CD4-positive, alpha-beta memory T cell (primary cell): ENCODE measurements at regions of chr6 and their contacts with region 1.

Region 1: DNA sequence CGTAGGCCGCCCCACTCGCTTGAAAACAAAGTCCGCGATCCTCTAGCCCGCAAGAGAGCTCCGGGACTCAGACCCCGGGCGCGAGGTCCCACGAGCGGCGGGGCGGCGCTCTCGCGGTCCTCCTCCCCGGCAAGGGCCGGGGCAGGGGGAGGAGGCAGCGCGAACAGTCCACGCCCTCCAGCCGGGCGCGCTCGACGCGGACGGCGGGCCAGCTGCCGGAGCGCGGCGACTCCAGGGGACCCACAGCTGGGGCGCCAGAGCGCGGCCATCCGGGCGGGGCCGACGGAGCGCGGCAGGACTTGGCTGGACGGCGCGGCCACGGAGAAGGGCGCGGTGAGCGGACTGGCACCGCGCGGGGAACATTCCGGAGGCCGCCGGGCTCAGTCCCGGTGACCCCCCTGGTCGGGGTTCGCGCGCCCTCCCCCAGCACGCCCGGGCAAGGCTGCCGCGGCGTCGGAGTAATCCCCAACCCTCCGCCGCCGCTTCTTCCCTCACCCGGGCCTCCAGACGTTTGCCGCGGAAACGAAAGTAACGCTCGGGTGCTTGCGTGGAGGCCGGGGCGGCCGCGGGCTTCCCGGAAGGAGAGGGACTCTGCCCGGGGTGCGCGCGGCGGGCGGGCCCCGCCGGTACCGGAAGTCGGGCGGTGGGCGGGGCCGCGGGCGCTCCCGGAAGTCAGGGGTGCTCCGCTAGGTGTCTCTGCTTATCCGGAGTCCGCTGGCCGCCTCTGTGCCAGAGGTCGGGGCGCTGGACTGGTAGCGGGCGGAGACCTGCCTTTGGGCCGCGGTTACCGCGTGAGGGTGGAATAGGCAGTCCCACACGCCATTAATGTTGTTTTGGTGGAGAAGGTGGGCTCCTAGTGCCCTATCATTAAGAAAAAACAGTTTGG is at the start of gene RIPK1:
- DNase-seq: peak; percentile 93 to 96 (median 94)
- H3K4me3 ChIP-seq: peak within 1 kb of the TSS; percentile 64 to 88
- H3K4me3 Mint-ChIP-seq: peak within 1 kb of the TSS; percentile 94 to 99 (median 96)
- H3K27ac ChIP-seq: peak within 1 kb of the TSS; percentile 98
- H3K27ac Mint-ChIP-seq: peak within 1 kb of the TSS; percentile 96 to 99 (median 98)
- H3K4me1 ChIP-seq: peaks cover 61% of the 10 kb centered on the region
- H3K4me1 Mint-ChIP-seq: peaks cover 40 to 85% (median 57%) of the 10 kb centered on the region in 4 donors
- H3K27me3 ChIP-seq: no peaks in the 10 kb centered on the region
- H3K27me3 Mint-ChIP-seq: no peaks in the 10 kb centered on the region
- total RNA-seq, gene RIPK1: 38.7 to 39.0 TPM

Region 2: DNA sequence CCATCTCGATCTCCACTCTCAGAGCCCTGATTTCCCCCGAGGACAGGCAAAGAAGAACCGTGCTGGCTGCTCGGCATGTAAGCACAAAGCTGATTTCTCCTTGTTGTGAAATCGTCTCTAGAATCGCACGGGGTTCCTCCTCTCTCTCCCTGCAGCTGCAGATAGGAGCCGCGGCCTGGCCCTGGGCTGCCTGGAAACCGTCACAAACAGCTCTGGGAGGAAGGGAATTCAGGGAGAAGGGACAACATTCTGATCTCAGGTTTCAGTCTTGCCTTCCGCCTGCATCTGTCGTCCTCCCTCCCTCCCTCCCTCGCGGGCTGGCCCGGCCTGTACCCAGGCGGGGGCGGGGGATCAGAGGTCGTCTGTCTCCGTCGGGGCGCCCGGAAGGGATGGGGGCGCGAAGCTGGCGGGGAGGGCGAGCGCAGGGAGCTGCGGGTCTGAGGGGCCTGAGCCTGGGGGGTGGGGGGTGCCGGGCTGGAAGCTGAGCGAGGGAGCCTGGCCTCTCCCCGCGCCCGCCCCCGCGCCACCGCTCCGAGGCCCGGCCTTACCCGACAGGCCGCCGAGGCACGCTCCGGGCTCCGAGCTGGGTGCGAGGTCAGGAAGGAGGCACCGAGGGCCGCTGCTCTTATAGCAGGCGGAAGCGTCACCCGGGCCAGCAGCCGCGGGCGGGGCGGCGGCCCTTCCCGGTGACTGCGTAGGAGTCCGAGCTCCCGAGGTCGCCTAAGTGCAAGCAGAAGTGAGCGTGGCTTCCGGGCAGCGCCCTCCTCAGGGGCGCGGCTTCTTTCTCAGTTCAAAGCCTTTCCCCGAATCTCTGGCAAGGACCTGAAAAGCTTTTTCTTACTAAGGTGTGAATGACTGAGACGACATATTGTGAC is 227.1 kb before region 1 on chr6 and contains the start of gene SERPINB1:
- CTCF ChIA-PET with region 1: no interaction called
- POLR2A ChIA-PET with region 1: interaction called, 10 read pairs
- intact Hi-C with region 1: no loop called
- DNase-seq: peak; percentile 64 to 73 (median 68)
- H3K4me3 ChIP-seq: peak within 1 kb of the TSS; percentile 49 to 58
- H3K4me3 Mint-ChIP-seq: peak within 1 kb of the TSS; percentile 89 to 96 (median 93)
- H3K27ac ChIP-seq: peak within 1 kb of the TSS; percentile 73
- H3K27ac Mint-ChIP-seq: peak within 1 kb of the TSS; percentile 93 to 98 (median 95)
- H3K4me1 ChIP-seq: peaks cover 46% of the 10 kb centered on the region
- H3K4me1 Mint-ChIP-seq: peaks cover 39 to 63% (median 51%) of the 10 kb centered on the region in 4 donors
- H3K27me3 ChIP-seq: no peaks in the 10 kb centered on the region
- H3K27me3 Mint-ChIP-seq: no peaks in the 10 kb centered on the region
- total RNA-seq, gene SERPINB1: 56.7 to 58.0 TPM

Region 3: GRCh38 chr6:2999618-3000557 is 68.7 kb before region 1 on chr6 and contains the start of gene NQO2:
- CTCF ChIA-PET with region 1: interaction called, 20 read pairs
- POLR2A ChIA-PET with region 1: interaction called, 29 read pairs
- intact Hi-C with region 1: loop called (anchors 1 kb)
- DNase-seq: peak; percentile 79 to 88 (median 85)
- H3K4me3 ChIP-seq: peak within 1 kb of the TSS; percentile 81 to 92
- H3K4me3 Mint-ChIP-seq: peak within 1 kb of the TSS; percentile 87 to 95 (median 91)
- H3K27ac ChIP-seq: peak within 1 kb of the TSS; percentile 80
- H3K27ac Mint-ChIP-seq: peak within 1 kb of the TSS; percentile 85 to 96 (median 91)
- H3K4me1 ChIP-seq: peaks cover 23% of the 10 kb centered on the region
- H3K4me1 Mint-ChIP-seq: peaks cover 17 to 38% (median 27%) of the 10 kb centered on the region in 4 donors
- H3K27me3 ChIP-seq: no peaks in the 10 kb centered on the region
- H3K27me3 Mint-ChIP-seq: no peaks in the 10 kb centered on the region
- total RNA-seq, gene NQO2: 34.2 to 36.6 TPM

Region 4: GRCh38 chr6:3052481-3053230 is 15.9 kb before region 1 on chr6:
- CTCF ChIA-PET with region 1: interaction called, 4 read pairs
- POLR2A ChIA-PET with region 1: interaction called, 24 read pairs
- intact Hi-C with region 1: no loop called
- DNase-seq: no peak
- H3K4me3 ChIP-seq: peak overlapping the region in 1 of 2 donors; percentile 61
- H3K4me3 Mint-ChIP-seq: peak overlapping the region; percentile 53 to 86 (median 78)
- H3K27ac ChIP-seq: peak overlapping the region; percentile 44
- H3K27ac Mint-ChIP-seq: peak overlapping the region in 6 of 7 donors; percentile 65 to 85 (median 80)
- H3K4me1 ChIP-seq: peaks cover 13% of the 10 kb centered on the region
- H3K4me1 Mint-ChIP-seq: peaks cover 6 to 32% (median 16%) of the 10 kb centered on the region in 4 donors
- H3K27me3 ChIP-seq: no peaks in the 10 kb centered on the region
- H3K27me3 Mint-ChIP-seq: no peaks in the 10 kb centered on the region

Region 5: DNA sequence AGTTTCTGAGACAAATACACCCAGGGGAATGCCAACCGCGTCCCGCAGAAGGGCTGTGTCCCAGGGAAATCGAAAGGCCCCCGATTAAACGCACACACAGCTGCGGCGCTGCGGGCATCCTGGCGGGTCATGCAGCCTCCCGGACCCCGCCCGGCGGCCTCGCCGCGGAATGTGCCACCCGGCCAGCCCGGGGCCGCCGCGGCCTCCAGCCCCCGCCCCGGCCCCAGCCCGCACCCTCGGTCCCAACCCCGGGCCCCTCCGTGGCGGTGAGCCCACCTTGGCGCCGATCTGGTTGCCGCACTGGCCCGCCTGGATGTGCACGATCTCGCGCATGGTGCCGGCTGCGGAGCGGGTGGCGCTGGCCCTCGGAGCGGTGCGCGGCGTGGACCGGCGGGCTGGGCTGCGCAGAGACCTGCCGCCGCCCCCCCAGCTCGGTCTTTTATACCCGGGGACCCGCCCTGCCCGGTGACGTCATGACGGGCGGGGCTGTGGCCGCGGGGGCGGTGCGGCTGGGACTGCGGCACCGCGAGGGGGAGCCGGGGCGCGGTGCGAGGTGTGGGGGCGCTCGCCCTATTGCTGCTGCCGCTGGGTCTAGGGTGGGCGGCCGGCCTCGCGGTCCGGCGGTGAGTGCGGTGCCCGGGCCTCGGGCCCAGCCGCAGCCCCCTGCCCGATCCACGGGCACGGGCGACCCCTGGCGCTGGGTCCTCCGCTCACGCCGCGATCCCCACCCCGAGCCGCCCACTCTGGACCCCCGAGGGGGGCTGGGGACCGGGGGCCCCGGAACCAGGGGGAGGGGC is 88.8 kb after region 1 on chr6 and contains the start of gene TUBB2A:
- CTCF ChIA-PET with region 1: interaction called, 3 read pairs
- POLR2A ChIA-PET with region 1: interaction called, 8 read pairs
- intact Hi-C with region 1: loop called (anchors 2 kb)
- DNase-seq: peak; percentile 83 to 95 (median 91)
- H3K4me3 ChIP-seq: peak within 1 kb of the TSS; percentile 49 to 81
- H3K4me3 Mint-ChIP-seq: peak within 1 kb of the TSS; percentile 88 to 95 (median 92)
- H3K27ac ChIP-seq: peak within 1 kb of the TSS; percentile 81
- H3K27ac Mint-ChIP-seq: peak within 1 kb of the TSS; percentile 86 to 97 (median 94)
- H3K4me1 ChIP-seq: peaks cover 30% of the 10 kb centered on the region
- H3K4me1 Mint-ChIP-seq: peaks cover 21 to 44% (median 32%) of the 10 kb centered on the region in 4 donors
- H3K27me3 ChIP-seq: no peaks in the 10 kb centered on the region
- H3K27me3 Mint-ChIP-seq: no peaks in the 10 kb centered on the region
- total RNA-seq, gene TUBB2A: 5.2 to 5.4 TPM

Region 6: DNA sequence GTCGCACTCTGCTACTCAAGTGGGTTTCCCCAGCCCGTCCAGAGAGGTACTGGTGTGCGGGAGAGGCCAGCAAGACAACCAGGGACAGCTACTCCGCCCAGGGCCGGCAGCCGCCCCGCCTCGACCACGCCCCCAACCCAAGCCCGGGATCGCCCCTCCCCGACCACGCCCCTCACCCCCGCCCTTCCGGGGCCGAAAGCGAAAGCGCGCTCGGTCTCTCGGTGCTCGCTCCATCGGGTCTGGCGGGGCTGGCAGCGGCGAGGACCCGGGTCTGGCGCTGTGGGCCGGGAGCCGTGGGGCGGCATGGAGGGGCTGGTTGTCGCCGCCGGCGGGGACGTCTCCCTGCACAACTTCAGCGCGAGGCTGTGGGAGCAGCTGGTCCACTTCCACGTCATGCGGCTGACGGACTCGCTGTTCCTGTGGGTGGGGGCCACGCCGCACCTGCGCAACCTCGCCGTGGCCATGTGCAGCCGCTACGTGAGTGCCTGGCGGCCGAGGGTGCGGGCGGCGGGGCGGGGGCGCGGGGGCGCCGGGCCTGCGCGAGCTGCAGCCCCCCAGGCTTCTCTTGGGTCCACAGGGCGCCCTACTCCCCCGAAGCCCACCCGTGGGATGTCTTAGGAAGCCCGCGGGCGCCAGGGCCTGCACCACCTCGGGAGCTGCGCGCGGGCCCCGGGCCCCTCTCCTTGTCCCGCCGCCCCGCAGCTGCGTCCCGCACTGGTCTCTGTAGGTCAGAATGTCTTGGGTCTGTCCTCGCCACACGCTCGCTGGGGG is 190.3 kb after region 1 on chr6 and contains the start of gene PSMG4:
- CTCF ChIA-PET with region 1: interaction called, 3 read pairs
- POLR2A ChIA-PET with region 1: interaction called, 3 read pairs
- intact Hi-C with region 1: loop called (anchors 2 kb)
- DNase-seq: peak; percentile 87 to 92 (median 88)
- H3K4me3 ChIP-seq: peak within 1 kb of the TSS; percentile 44 to 67
- H3K4me3 Mint-ChIP-seq: peak within 1 kb of the TSS; percentile 93 to 99 (median 96)
- H3K27ac ChIP-seq: peak within 1 kb of the TSS; percentile 70
- H3K27ac Mint-ChIP-seq: peak within 1 kb of the TSS; percentile 92 to 99 (median 95)
- H3K4me1 ChIP-seq: peaks cover 45% of the 10 kb centered on the region
- H3K4me1 Mint-ChIP-seq: peaks cover 21 to 49% (median 37%) of the 10 kb centered on the region in 4 donors
- H3K27me3 ChIP-seq: no peaks in the 10 kb centered on the region
- H3K27me3 Mint-ChIP-seq: no peaks in the 10 kb centered on the region
- total RNA-seq, gene PSMG4: 41.0 to 41.6 TPM

Region 7: DNA sequence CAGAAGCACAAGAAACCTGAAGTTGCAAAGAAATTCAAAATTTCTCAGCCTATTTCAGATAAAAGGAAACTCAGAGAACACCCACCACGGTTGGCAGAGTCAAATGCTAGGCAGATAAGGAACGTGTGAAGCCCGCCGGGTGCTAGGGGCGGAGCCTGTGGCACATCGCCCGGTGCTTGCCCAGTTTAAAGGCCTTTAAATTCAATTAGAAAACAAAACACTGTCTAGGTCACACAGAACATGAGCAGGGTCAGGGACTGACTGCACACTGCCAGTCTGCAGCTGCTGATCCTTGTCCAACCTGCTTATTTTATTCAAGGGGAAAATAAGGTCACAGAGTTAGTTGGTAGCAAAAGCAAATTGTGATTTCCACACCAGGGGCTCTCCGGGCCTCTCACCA is 266.0 kb after region 1 on chr6:
- CTCF ChIA-PET with region 1: no interaction called
- POLR2A ChIA-PET with region 1: no interaction called
- intact Hi-C with region 1: no loop called
- DNase-seq: no peak
- H3K4me3 ChIP-seq: no peak overlapping the region
- H3K4me3 Mint-ChIP-seq: no peak overlapping the region
- H3K27ac ChIP-seq: no peak overlapping the region
- H3K27ac Mint-ChIP-seq: no peak overlapping the region
- H3K4me1 ChIP-seq: peaks cover 11% of the 10 kb centered on the region
- H3K4me1 Mint-ChIP-seq: peaks cover 7 to 15% (median 8%) of the 10 kb centered on the region in 4 donors
- H3K27me3 ChIP-seq: no peaks in the 10 kb centered on the region
- H3K27me3 Mint-ChIP-seq: no peaks in the 10 kb centered on the region

Region 8: GRCh38 chr6:3732345-3733141 is 664.0 kb after region 1 on chr6:
- CTCF ChIA-PET with region 1: interaction called, 3 read pairs
- POLR2A ChIA-PET with region 1: no interaction called
- intact Hi-C with region 1: loop called (anchors 5 kb)
- DNase-seq: peak; percentile 50 to 63 (median 58)
- H3K4me3 ChIP-seq: no peak overlapping the region
- H3K4me3 Mint-ChIP-seq: peak overlapping the region in 1 of 8 donors; percentile 22
- H3K27ac ChIP-seq: no peak overlapping the region
- H3K27ac Mint-ChIP-seq: peak overlapping the region in 1 of 7 donors; percentile 55
- H3K4me1 ChIP-seq: peaks cover 3% of the 10 kb centered on the region
- H3K4me1 Mint-ChIP-seq: peaks cover 0 to 4% (median 2%) of the 10 kb centered on the region in 4 donors
- H3K27me3 ChIP-seq: no peaks in the 10 kb centered on the region
- H3K27me3 Mint-ChIP-seq: peaks cover 3 to 5% of the 10 kb centered on the region in 2 donors